Activated naive CD4-positive, alpha-beta T cell treated with anti-CD3 and anti-CD28 coated beads for 36 hours (primary cell): ENCODE measurements at regions of chr9 and their contacts with region 1.

Region 1: DNA sequence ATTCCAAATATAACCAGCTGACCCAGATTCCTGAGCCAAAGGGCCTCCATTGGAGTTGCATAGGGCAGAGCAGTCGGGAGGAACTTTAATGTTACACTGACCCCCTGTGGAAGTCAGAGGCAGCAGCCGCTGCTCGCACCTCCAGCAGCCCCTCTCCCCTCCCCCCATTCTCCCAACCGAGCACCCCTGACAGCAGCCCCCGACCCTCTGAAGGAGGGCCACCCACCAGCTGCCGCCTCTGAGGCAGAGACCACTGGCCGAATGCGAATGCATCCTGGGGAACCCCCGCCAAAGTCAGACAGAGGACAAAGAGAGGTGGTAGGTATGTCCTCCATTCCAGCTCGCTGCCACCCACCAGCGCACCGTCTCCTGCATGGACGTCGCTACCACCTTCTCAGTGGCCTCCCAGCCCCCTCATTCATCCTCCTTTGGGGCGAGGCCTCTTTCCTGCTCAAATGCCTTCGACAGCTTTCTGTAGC is 231.0 kb downstream of the CDK5RAP2 start:
- DNase-seq: peak; percentile 38
- H3K4me3 Mint-ChIP-seq: no peak overlapping the region
- H3K27ac Mint-ChIP-seq: no peak overlapping the region
- H3K4me1 Mint-ChIP-seq: no peaks in the 10 kb centered on the region
- H3K27me3 Mint-ChIP-seq: no peaks in the 10 kb centered on the region

Region 2: DNA sequence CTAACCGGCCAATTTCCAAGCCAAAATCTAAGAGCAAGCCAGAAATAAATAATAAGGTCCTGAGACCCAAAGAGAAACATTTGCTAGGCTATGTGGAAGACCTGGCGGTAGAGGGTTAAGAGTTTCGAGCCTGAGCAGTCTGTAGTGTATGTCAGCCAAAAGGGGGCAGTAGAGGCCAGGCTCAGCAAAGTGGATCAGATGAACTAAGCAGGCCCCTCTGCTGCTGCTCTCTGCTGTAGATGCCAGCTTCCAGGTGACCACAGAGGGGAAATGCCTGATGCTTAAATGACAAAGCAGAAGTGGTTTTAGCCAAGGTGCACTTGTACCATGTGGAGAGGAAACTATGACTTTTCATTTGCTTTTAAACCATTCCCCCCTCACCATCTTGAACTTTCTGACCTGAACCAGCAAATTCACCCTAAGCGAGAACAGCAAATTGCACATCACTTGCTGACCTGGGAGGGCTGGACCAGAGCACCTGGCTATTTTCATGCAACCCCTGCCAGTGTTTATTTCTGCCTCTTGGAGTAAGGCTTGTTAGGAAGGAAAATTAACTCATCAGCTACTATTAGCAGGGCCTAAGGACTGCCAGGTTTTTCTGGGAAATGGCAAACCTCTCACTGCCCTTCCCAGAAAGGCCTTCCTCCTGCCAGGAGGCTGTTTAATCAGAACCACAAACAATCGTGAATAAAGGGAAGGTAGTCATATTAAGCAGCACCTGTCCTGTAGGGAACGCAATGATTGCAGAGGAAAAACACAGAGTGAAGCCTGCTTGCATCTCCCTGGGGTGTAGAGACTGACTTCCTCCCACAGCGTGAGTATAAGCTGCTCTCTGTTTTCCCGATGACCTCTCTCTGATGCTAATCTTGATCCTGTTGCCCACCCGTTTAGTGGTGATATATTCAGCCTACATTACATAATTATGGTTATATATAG is 1826.6 kb before region 1 on chr9:
- CTCF ChIA-PET with region 1: no interaction called
- intact Hi-C with region 1: loop called (anchors 10 kb)
- DNase-seq: peak; percentile 28
- H3K4me3 Mint-ChIP-seq: no peak overlapping the region
- H3K27ac Mint-ChIP-seq: no peak overlapping the region
- H3K4me1 Mint-ChIP-seq: no peaks in the 10 kb centered on the region
- H3K27me3 Mint-ChIP-seq: peaks cover 5% of the 10 kb centered on the region

Region 3: GRCh38 chr9:119556129-119556875 is 792.7 kb before region 1 on chr9:
- CTCF ChIA-PET with region 1: no interaction called
- intact Hi-C with region 1: loop called (anchors 1 kb)
- DNase-seq: peak; percentile 68
- H3K4me3 Mint-ChIP-seq: no peak overlapping the region
- H3K27ac Mint-ChIP-seq: no peak overlapping the region
- H3K4me1 Mint-ChIP-seq: peaks cover 3% of the 10 kb centered on the region
- H3K27me3 Mint-ChIP-seq: peaks cover 32% of the 10 kb centered on the region

Region 4: DNA sequence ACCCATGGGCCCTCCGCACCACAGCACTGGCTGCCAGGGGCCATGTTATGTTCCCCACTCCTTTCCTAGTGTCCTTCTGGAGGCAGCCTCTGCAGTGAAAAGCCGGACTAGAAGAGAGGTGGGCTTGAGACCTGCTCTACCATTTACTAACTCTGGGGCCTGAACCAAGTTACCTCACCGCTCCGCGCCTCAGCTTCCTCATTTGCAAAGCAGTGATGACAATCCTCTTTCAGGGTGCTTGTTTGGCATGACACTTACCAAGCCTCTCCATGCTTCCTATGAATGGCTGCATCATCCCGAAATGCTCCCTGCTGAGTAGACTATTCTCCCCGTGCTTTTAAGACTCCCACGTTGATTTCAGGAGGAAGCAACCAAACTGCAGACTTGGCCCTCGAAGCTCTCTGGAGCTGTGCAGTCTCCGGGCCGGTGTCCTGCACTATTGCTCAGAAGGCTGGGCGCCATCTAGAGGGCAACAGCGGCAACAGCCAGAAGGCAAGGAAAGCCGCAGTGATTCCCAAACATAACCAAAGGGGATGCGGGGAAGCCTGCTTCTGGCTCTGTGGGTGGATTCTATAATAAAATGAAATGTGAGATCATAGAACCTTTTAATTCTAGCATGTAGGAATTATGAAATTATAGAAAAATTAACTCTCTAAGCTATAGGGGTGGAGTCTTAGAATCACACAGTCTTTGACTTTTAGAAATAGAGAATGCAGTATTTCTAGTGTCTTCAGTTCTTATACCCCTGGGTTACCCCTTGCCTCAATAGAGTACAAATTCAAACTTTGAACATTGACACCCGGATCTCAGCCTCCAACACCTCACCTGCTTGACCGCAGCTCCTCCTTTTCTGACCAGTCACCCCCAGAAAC is 379.9 kb before region 1 on chr9:
- CTCF ChIA-PET with region 1: no interaction called
- intact Hi-C with region 1: loop called (anchors 5 kb)
- DNase-seq: peak; percentile 64
- H3K4me3 Mint-ChIP-seq: no peak overlapping the region
- H3K27ac Mint-ChIP-seq: no peak overlapping the region
- H3K4me1 Mint-ChIP-seq: no peaks in the 10 kb centered on the region
- H3K27me3 Mint-ChIP-seq: peaks cover 7% of the 10 kb centered on the region

Region 5: DNA sequence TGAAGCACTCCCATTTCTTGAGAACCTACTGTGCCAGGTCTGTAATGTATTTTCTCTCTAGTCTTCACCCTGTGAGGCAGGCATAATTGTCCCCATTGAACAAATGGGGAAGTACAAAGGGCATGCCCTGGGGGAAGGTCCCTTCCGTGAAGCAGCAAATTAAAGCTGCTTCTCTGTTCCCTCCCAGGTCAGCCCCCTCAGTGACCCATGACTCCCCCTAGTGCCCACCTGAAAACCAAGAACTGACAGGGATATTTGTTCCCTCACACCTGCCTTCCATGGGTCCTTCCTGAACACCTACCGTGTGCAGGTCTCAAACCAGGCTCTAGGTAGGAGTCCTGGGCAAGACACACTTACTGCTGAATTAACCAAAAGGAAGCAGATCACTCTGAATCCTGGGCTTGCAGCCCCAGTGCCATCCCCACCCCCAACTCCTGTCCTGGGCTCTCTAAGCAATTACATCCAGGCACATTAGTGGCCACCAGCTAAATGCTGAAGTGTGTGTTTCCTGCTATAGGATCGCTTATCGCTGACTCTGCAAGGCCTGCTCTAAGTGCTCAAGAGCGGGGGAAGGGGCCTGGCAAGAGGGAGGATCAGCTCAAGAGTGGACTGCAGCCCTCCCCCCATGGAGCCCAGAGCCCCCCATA is 23.9 kb before region 1 on chr9:
- CTCF ChIA-PET with region 1: no interaction called
- intact Hi-C with region 1: no loop called
- DNase-seq: no peak
- H3K4me3 Mint-ChIP-seq: no peak overlapping the region
- H3K27ac Mint-ChIP-seq: no peak overlapping the region
- H3K4me1 Mint-ChIP-seq: no peaks in the 10 kb centered on the region
- H3K27me3 Mint-ChIP-seq: no peaks in the 10 kb centered on the region

Region 6: DNA sequence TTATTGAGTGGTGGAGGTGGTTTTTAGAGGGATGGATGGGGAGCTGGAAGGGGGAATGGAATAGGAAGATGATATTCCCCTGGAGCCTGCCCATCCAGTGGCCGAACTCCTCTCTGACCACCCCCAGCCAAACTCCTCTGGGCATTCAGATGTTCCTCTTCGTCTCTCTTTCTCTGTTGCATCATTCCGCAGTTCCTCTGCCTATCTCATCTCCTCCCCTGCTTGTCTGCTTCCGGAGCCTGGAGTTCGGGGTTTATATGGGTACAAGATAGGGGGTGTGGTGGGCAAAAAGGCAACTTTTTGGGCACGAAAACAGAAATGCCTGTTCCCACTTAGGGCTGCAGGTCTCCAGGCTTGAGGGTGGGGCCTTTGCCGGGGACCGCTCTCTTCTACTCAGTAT is 243.2 kb after region 1 on chr9:
- CTCF ChIA-PET with region 1: no interaction called
- intact Hi-C with region 1: loop called (anchors 5 kb)
- DNase-seq: no peak
- H3K4me3 Mint-ChIP-seq: no peak overlapping the region
- H3K27ac Mint-ChIP-seq: no peak overlapping the region
- H3K4me1 Mint-ChIP-seq: no peaks in the 10 kb centered on the region
- H3K27me3 Mint-ChIP-seq: no peaks in the 10 kb centered on the region